Breast epithelium (tissue), 4 donors: ENCODE measurements at regions of chr13 and their contacts with region 1.

Region 1: GRCh38 chr13:112225429-112226090 is 150.6 kb upstream of the SPACA7 start:
- DNase-seq: no peak
- H3K4me3 ChIP-seq: no peak overlapping the region
- H3K27ac ChIP-seq: no peak overlapping the region
- H3K4me1 ChIP-seq: no peaks in the 10 kb centered on the region
- H3K27me3 ChIP-seq: no peaks in the 10 kb centered on the region
- CTCF ChIP-seq: no peak
- POLR2A ChIP-seq: no peak

Region 2: DNA sequence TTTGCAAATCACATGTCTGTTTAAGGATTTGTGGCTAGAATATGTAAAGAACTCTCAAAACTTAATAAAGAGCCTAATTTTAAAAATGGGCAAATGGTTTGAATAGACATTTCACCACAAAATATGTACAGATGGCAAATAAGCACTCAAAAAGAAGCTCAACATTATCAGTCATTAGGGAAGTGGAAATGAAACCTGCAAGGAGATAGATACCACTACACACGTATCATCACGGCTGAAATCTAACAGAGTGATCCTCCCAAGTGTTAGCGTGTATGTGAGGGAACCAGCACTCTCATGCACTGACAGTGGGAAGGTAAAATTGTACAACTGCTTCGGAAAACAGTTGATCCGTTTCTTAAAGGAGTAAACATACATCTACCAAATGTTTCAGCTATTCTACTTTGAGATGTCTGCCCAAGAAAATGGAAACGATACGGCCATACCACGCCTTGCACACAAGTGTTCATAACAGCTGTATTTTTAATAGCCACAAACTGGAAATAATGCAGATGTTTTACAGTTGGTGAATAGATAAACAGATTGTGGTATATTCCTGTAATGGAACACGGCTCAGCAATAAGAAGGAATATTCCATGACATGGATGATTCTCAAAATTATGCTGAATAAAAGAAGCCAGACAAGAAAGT is 1096.0 kb before region 1 on chr13:
- intact Hi-C with region 1: loop called (anchors 10 kb)
- DNase-seq: no peak
- H3K4me3 ChIP-seq: no peak overlapping the region
- H3K27ac ChIP-seq: no peak overlapping the region
- H3K4me1 ChIP-seq: no peaks in the 10 kb centered on the region
- H3K27me3 ChIP-seq: no peaks in the 10 kb centered on the region
- CTCF ChIP-seq: no peak
- POLR2A ChIP-seq: no peak

Region 3: DNA sequence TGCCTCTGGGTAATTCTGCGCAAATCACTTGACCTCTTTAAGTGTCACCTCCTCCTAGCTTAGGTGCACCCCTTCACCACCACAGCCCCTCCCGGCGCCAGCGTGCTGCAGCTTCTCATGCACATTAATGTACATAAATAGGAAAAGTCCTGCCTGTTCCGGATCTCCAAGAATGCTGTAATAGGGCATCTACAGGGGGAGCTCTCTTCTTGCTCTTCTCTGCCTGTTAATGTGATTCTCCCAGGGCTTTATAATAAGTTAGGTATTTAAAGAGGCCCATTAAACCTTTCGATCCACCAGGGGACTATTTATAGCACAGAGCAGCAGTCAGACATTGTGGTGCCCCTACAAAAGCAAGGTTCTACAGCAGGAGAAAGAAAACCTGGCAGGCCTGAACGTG is 123.3 kb before region 1 on chr13:
- intact Hi-C with region 1: no loop called
- DNase-seq: no peak
- H3K4me3 ChIP-seq: no peak overlapping the region
- H3K27ac ChIP-seq: no peak overlapping the region
- H3K4me1 ChIP-seq: no peaks in the 10 kb centered on the region
- H3K27me3 ChIP-seq: peaks cover 10 to 69% of the 10 kb centered on the region in 2 donors
- CTCF ChIP-seq: no peak
- POLR2A ChIP-seq: no peak

Region 4: DNA sequence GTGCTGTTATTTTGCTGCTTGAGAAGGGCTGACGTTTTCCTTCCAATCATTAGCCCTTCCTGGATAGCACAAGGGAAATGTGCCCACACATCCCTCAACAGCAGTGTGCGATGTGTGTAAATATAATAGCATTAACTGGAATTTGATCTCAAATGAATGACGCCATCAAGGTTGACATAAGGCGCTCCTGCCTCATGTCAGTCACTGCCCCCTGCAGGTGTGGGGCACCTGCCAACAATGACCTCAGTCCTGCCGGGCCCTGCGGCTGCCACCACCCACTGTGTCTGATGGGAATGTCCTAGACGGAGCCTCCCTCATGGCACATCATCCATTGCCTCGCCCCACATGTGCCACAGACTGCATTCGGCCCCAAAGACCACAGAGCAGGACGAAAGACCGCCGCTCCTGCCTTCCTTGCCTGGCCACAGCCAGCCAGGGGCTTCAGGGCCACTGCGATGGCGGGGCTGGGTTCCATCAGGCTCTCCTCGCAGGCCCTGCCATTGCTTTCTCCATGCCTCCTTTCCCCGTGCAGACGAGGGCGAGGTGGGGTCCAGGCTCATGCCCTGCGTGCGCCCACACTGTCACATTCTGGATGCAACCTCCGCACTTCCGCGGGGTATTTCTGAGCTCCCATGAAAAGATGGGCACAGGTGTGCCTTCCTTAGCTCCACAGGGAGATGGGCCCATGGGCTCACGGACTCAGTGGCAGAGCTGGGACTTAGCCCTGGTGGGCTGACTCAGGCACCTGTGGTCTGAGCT is 11.9 kb before region 1 on chr13:
- intact Hi-C with region 1: loop called (anchors 1 kb)
- DNase-seq: peak; percentile 42 to 68
- H3K4me3 ChIP-seq: no peak overlapping the region
- H3K27ac ChIP-seq: no peak overlapping the region
- H3K4me1 ChIP-seq: no peaks in the 10 kb centered on the region
- H3K27me3 ChIP-seq: peaks cover 0 to 43% of the 10 kb centered on the region in 2 donors
- CTCF ChIP-seq: no peak
- POLR2A ChIP-seq: no peak